ENCODE measurements at regions of chr11 and their contacts with region 1.

Region 1: GRCh38 chr11:6443269-6444003 is 2.6 kb upstream of the HPX start:
- DNase-seq: peak; percentile 70
- H3K4me3 Mint-ChIP-seq: no peak overlapping the region
- H3K27ac Mint-ChIP-seq: no peak overlapping the region
- H3K4me1 Mint-ChIP-seq: no peaks in the 10 kb centered on the region
- H3K27me3 Mint-ChIP-seq: peaks cover 9% of the 10 kb centered on the region

Region 2: GRCh38 chr11:6389921-6390724 is 53.3 kb before region 1 on chr11 and contains the start of gene SMPD1:
- CTCF ChIA-PET with region 1: interaction called, 52 read pairs
- DNase-seq: peak; percentile 96
- H3K4me3 Mint-ChIP-seq: peak within 1 kb of the TSS; percentile 94
- H3K27ac Mint-ChIP-seq: peak within 1 kb of the TSS; percentile 94
- H3K4me1 Mint-ChIP-seq: peaks cover 57% of the 10 kb centered on the region
- H3K27me3 Mint-ChIP-seq: no peaks in the 10 kb centered on the region

Region 3: GRCh38 chr11:6402561-6402981 is 40.9 kb before region 1 on chr11:
- CTCF ChIA-PET with region 1: interaction called, 15 read pairs
- DNase-seq: peak; percentile 93
- H3K4me3 Mint-ChIP-seq: peak overlapping the region; percentile 77
- H3K27ac Mint-ChIP-seq: peak overlapping the region; percentile 98
- H3K4me1 Mint-ChIP-seq: peaks cover 84% of the 10 kb centered on the region
- H3K27me3 Mint-ChIP-seq: peaks cover 4% of the 10 kb centered on the region

Region 4: DNA sequence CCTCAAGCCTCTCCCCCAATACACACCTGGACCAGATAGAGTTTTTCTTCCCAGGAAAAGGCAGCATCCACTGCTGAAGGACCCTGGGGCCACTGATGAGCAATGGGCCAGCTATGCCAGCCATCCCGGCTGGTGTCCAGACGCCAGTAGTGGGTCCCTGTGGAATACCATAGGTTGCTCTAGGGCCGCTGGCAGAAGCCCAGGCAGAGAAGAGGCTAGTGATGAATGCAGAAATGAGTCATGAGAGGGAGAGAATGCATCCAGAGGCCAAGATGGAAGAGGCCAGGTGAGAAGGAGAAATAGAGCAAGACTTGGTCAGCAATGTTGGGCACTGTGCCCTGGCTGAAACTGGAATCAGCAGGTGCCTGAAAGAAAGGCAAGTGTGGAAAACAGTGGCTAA is 11.6 kb before region 1 on chr11:
- CTCF ChIA-PET with region 1: interaction called, 17 read pairs
- DNase-seq: no peak
- H3K4me3 Mint-ChIP-seq: no peak overlapping the region
- H3K27ac Mint-ChIP-seq: no peak overlapping the region
- H3K4me1 Mint-ChIP-seq: peaks cover 4% of the 10 kb centered on the region
- H3K27me3 Mint-ChIP-seq: peaks cover 6% of the 10 kb centered on the region

Region 5: DNA sequence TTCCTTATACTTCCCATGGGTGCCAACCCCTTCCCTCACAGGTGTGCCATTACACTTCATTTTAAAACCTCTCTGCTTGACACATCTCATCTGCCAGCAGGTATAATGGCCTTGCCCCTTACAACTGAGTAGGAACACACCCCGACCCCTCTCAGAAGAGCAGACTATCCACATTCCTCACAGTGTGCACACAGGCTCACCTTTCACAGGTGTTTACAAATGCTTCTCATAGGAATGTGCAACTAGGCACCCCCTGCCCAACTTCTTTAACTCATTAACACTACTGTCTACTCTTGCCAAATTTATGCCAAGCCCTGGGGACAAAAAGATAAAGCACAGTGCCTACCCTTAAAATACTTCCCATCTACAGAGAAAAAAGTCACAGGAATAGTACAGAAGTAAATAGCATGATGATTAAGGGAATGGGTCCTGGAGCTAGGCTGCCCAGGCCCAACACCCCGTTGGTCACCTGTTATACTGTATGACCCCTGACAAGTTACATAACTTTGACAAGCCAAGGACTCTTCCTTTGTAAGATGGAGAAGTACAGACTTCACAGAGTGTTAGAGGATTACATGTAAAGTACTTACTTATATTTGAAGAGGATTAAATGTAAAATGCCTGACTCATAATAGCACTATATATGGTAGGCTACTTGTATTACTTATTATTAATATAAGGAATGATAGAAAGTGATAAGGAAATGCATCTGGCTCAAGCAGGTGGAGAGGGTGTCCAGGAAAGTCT is 15.1 kb after region 1 on chr11:
- CTCF ChIA-PET with region 1: interaction called, 20 read pairs
- DNase-seq: no peak
- H3K4me3 Mint-ChIP-seq: no peak overlapping the region
- H3K27ac Mint-ChIP-seq: no peak overlapping the region
- H3K4me1 Mint-ChIP-seq: no peaks in the 10 kb centered on the region
- H3K27me3 Mint-ChIP-seq: no peaks in the 10 kb centered on the region

Region 6: GRCh38 chr11:6505577-6506240 is 62.3 kb after region 1 on chr11:
- CTCF ChIA-PET with region 1: interaction called, 18 read pairs
- DNase-seq: no peak
- H3K4me3 Mint-ChIP-seq: no peak overlapping the region
- H3K27ac Mint-ChIP-seq: no peak overlapping the region
- H3K4me1 Mint-ChIP-seq: peaks cover 3% of the 10 kb centered on the region
- H3K27me3 Mint-ChIP-seq: no peaks in the 10 kb centered on the region

Measured in activated naive CD4-positive, alpha-beta T cell treated with anti-CD3 and anti-CD28 coated beads, Interleukin-2, amount 10 ng/mL, durations not matched to agents 7 days and 5 days (primary cell).